ENCODE measurements at regions of chr1 and their contacts with region 1.

Region 1: GRCh38 chr1:180863158-180863775 is 49.4 kb upstream of the KIAA1614 start:
- DNase-seq: peak; percentile 75
- H3K4me3 ChIP-seq: no peak overlapping the region
- H3K27ac ChIP-seq: no peak overlapping the region
- H3K4me1 ChIP-seq: no peaks in the 10 kb centered on the region
- H3K27me3 ChIP-seq: no peaks in the 10 kb centered on the region
- CTCF ChIP-seq: peak; percentile 76

Region 2: GRCh38 chr1:180533266-180533987 is 329.8 kb before region 1 on chr1:
- CTCF ChIA-PET with region 1: interaction called, 9 read pairs
- POLR2A ChIA-PET with region 1: no interaction called
- intact Hi-C with region 1: loop called (anchors 5 kb)
- DNase-seq: peak; percentile 71
- H3K4me3 ChIP-seq: no peak overlapping the region
- H3K27ac ChIP-seq: no peak overlapping the region
- H3K4me1 ChIP-seq: no peaks in the 10 kb centered on the region
- H3K27me3 ChIP-seq: no peaks in the 10 kb centered on the region
- CTCF ChIP-seq: peak; percentile 91

Region 3: DNA sequence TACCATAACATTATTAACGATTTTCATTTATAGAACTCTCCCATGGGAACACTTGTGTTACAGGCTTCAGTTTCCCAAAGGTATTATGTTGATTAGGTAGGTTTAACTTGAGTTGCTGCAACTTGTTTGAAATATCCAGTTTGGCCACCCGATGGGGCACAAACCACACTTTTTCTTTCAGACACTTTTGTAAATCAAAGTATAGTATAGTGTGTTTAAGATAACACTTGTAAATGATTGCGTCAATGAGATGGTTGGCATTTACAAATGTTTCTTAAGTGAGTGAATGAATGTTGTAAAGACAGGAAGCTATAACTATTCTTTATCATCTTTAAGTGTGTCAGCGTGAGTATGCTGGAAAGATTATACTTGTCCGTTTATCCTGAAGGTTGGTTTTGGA is 227.1 kb before region 1 on chr1:
- CTCF ChIA-PET with region 1: interaction called, 4 read pairs
- POLR2A ChIA-PET with region 1: no interaction called
- intact Hi-C with region 1: loop called (anchors 5 kb)
- DNase-seq: peak; percentile 73
- H3K4me3 ChIP-seq: no peak overlapping the region
- H3K27ac ChIP-seq: no peak overlapping the region
- H3K4me1 ChIP-seq: peaks cover 47% of the 10 kb centered on the region
- H3K27me3 ChIP-seq: no peaks in the 10 kb centered on the region
- CTCF ChIP-seq: peak; percentile 62

Region 4: DNA sequence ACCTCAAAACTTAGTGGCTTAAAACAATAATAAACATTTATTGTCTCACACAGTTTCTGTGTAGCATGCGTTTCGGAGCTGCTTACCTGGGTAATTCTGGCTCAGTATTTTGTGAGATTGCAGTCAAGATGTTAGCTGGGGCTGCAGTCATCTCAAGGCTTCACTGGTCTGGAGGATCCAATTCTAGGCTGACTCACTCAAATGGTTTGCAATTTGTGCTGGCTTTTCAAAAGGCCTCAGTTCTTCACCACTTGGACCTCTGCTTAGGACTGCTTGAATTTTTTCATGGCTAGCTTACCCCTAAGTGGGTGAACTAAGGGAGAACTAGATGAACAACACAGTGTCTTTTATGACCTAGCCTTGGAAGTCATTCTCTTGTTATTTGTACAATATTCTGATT is 210.5 kb before region 1 on chr1:
- CTCF ChIA-PET with region 1: no interaction called
- POLR2A ChIA-PET with region 1: no interaction called
- intact Hi-C with region 1: no loop called
- DNase-seq: no peak
- H3K4me3 ChIP-seq: no peak overlapping the region
- H3K27ac ChIP-seq: no peak overlapping the region
- H3K4me1 ChIP-seq: no peaks in the 10 kb centered on the region
- H3K27me3 ChIP-seq: no peaks in the 10 kb centered on the region
- CTCF ChIP-seq: no peak